ENCODE measurements at regions of chr5 and their contacts with region 1.

Region 1: DNA sequence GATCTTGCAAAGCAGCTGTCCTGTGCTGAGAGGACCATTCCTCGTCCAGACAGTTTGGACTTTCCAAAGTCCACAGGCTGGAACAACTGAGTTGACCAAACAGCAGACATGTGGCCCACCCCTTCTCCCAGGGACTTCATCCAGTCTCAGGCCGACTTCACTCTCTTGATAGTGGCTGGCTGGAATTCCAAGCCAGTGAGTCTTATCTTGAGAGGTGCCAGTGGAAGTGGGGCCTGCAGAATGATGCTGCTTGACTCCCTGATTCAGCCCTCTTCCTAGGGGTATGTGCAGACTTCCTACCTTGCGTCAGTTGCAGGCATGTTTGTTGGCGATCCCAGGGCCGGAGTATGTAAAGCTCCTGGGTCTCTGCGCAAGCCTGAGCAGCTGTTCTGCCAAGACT is 131.4 kb upstream of the TSLP start:
- DNase-seq: no peak
- ATAC-seq: no peak
- H3K4me3 ChIP-seq: no peak overlapping the region
- H3K27ac ChIP-seq: no peak overlapping the region
- H3K4me1 ChIP-seq: no peaks in the 10 kb centered on the region
- H3K27me3 ChIP-seq: no peaks in the 10 kb centered on the region
- CTCF ChIP-seq: no peak

Region 2: DNA sequence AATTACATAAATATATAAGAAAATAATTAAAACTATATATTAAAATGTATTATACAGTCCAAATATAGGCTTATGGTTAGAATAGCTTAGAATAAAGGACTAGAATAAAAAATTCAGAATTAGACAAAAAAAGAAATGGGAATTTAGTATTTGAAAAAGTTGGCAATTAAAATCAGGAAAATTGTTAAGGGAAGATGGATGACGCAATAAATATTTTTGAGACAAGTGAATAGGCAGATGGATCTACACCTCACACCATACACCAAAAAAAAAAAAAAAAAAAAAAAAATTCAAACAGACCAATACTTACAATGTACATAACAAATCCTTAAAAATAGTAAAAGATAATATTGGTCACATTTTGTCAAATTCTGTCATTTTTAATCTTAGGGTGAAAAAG is 414.4 kb before region 1 on chr5:
- CTCF ChIA-PET with region 1: no interaction called
- POLR2A ChIA-PET with region 1: no interaction called
- in situ Hi-C with region 1: no loop called
- intact Hi-C with region 1: no loop called
- DNase-seq: no peak
- ATAC-seq: no peak
- H3K4me3 ChIP-seq: no peak overlapping the region
- H3K27ac ChIP-seq: no peak overlapping the region
- H3K4me1 ChIP-seq: no peaks in the 10 kb centered on the region
- H3K27me3 ChIP-seq: no peaks in the 10 kb centered on the region
- CTCF ChIP-seq: no peak

Region 3: DNA sequence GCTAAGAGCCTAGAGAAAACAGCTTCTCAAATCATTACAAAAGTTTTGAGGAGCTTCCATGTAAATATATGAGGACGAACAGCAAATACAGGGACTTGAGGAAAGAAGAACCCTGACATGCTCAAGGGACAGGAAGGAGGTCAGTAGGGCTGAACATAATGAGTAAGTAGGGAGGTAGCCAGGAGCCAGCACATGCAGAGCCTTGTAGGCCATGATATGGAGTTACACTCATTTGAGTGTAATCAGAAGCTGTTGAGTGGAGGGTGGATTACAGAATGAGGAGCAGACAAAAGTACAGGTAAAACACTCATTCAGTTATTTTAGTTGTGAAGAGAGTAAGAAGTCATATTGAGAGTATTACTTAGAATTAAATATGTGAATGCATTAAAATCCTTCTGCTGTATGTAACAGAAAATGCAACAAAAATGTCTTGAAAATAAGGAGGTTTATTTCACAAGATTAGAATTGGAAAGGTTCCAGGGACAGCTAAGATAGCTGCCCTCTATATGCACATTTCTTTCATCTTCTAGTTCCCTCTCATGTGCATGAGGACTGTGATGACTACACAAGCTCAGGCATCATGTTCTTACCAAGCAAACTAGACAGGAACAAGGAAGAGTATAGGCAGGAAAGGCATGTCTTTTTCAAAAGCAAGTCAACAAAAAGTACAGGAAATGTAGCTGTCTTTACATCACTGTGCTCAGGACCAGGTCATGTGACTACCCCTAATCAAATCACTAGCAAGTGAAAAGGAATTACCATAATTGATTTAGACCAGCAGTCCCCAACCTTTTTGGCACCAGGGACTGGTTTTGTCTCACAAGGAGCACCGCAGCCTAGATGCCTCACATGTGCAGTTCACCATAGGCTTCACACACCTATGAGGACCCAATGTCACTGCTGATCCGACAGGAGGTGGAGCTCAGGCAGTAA is 300.9 kb before region 1 on chr5:
- CTCF ChIA-PET with region 1: no interaction called
- POLR2A ChIA-PET with region 1: no interaction called
- in situ Hi-C with region 1: no loop called
- intact Hi-C with region 1: no loop called
- DNase-seq: no peak
- ATAC-seq: no peak
- H3K4me3 ChIP-seq: no peak overlapping the region
- H3K27ac ChIP-seq: no peak overlapping the region
- H3K4me1 ChIP-seq: no peaks in the 10 kb centered on the region
- H3K27me3 ChIP-seq: no peaks in the 10 kb centered on the region
- CTCF ChIP-seq: no peak

Region 4: GRCh38 chr5:110957934-110958333 is 17.8 kb after region 1 on chr5:
- CTCF ChIA-PET with region 1: no interaction called
- POLR2A ChIA-PET with region 1: interaction called, 10 read pairs
- in situ Hi-C with region 1: no loop called
- intact Hi-C with region 1: no loop called
- DNase-seq: no peak
- ATAC-seq: no peak
- H3K4me3 ChIP-seq: no peak overlapping the region
- H3K27ac ChIP-seq: no peak overlapping the region
- H3K4me1 ChIP-seq: no peaks in the 10 kb centered on the region
- H3K27me3 ChIP-seq: no peaks in the 10 kb centered on the region; the same call in 1 of the 2 replicates
- CTCF ChIP-seq: no peak

Region 5: DNA sequence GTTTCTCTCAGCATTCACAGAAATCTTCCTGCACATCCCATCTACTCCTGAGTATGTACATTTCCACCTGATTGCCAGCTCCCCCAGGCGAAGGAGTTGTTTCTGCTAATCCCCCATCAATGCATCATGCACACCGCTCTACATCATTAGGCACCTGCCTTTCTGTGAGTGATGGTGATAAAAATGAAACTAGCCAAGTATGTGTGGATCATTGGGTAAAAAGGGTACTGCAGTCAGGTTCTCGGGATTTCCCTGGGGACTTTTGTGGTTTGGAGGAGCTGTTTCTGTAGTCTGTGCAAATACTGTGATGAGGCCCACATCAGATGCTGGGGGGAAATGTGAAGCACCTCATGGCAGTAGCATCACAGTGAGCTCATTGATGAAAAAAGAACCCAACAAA is 314.5 kb after region 1 on chr5:
- CTCF ChIA-PET with region 1: no interaction called
- POLR2A ChIA-PET with region 1: no interaction called
- in situ Hi-C with region 1: no loop called
- intact Hi-C with region 1: no loop called
- DNase-seq: no peak
- ATAC-seq: no peak
- H3K4me3 ChIP-seq: no peak overlapping the region
- H3K27ac ChIP-seq: no peak overlapping the region
- H3K4me1 ChIP-seq: no peaks in the 10 kb centered on the region
- H3K27me3 ChIP-seq: no peaks in the 10 kb centered on the region
- CTCF ChIP-seq: no peak